CD8-positive, alpha-beta T cell (primary cell): ENCODE measurements at regions of chr22 and their contacts with region 1.

Region 1: DNA sequence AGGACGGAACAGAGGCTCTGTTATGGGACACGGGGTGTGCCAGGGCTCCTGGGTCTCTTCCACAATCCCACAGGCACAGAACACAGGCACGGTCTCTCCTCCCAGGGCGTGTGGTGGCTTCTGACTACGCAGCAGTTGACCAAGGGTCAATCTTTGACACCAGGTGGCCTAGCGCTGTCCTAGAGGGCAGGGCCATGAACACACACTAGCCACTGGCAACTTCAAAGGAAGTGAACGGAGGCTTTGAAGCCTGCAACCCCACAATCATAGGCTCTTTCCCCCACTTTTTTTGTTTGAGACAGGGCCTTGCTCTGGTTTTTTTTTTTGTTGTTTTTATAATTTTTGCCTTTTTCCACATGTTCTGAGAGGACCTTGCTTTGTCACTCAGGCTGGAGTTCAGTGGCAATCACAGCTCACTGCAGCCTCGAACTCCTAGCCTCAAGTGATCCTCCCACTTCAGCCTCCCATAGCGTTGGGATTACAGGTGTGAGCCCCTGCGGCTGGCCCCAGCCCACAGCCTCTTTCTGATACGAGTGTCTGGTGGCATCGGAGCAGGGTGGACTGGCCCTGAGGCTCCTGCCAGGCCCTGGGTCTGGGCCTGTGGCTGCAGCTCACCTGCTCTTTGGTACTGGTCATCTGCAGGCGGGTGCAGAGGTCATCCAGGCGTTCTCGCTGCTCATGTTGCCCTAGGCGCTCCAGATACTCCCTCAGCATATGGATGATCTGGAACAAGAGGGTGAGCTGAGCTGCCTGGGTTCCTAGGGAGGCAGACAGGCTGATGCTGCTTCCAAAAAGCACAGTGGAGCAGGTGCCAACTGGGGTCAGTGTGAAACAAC is 9.1 kb downstream of the GALR3 start:
- DNase-seq: no peak
- ATAC-seq: no peak
- H3K4me3 ChIP-seq: no peak overlapping the region
- H3K4me3 Mint-ChIP-seq: no peak overlapping the region
- H3K27ac ChIP-seq: no peak overlapping the region
- H3K27ac Mint-ChIP-seq: no peak overlapping the region
- H3K4me1 ChIP-seq: no peaks in the 10 kb centered on the region
- H3K4me1 Mint-ChIP-seq: no peaks in the 10 kb centered on the region
- H3K27me3 ChIP-seq: no peaks in the 10 kb centered on the region
- H3K27me3 Mint-ChIP-seq: no peaks in the 10 kb centered on the region
- CTCF ChIP-seq: no peak

Region 2: GRCh38 chr22:37457093-37457893 is 374.9 kb before region 1 on chr22:
- CTCF ChIA-PET with region 1: no interaction called
- POLR2A ChIA-PET with region 1: no interaction called
- intact Hi-C with region 1: no loop called
- DNase-seq: peak; percentile 72 to 90 (median 83)
- ATAC-seq: peak; percentile 98
- H3K4me3 ChIP-seq: no peak overlapping the region
- H3K4me3 Mint-ChIP-seq: no peak overlapping the region
- H3K27ac ChIP-seq: no peak overlapping the region
- H3K27ac Mint-ChIP-seq: no peak overlapping the region
- H3K4me1 ChIP-seq: no peaks in the 10 kb centered on the region
- H3K4me1 Mint-ChIP-seq: no peaks in the 10 kb centered on the region
- H3K27me3 ChIP-seq: no peaks in the 10 kb centered on the region
- H3K27me3 Mint-ChIP-seq: no peaks in the 10 kb centered on the region
- CTCF ChIP-seq: peak; percentile 82

Region 3: GRCh38 chr22:37777122-37777687 is 55.0 kb before region 1 on chr22:
- CTCF ChIA-PET with region 1: no interaction called
- POLR2A ChIA-PET with region 1: no interaction called
- intact Hi-C with region 1: no loop called
- DNase-seq: no peak
- ATAC-seq: no peak
- H3K4me3 ChIP-seq: no peak overlapping the region
- H3K4me3 Mint-ChIP-seq: no peak overlapping the region
- H3K27ac ChIP-seq: no peak overlapping the region
- H3K27ac Mint-ChIP-seq: no peak overlapping the region
- H3K4me1 ChIP-seq: no peaks in the 10 kb centered on the region
- H3K4me1 Mint-ChIP-seq: no peaks in the 10 kb centered on the region
- H3K27me3 ChIP-seq: no peaks in the 10 kb centered on the region
- H3K27me3 Mint-ChIP-seq: no peaks in the 10 kb centered on the region
- CTCF ChIP-seq: no peak

Region 4: DNA sequence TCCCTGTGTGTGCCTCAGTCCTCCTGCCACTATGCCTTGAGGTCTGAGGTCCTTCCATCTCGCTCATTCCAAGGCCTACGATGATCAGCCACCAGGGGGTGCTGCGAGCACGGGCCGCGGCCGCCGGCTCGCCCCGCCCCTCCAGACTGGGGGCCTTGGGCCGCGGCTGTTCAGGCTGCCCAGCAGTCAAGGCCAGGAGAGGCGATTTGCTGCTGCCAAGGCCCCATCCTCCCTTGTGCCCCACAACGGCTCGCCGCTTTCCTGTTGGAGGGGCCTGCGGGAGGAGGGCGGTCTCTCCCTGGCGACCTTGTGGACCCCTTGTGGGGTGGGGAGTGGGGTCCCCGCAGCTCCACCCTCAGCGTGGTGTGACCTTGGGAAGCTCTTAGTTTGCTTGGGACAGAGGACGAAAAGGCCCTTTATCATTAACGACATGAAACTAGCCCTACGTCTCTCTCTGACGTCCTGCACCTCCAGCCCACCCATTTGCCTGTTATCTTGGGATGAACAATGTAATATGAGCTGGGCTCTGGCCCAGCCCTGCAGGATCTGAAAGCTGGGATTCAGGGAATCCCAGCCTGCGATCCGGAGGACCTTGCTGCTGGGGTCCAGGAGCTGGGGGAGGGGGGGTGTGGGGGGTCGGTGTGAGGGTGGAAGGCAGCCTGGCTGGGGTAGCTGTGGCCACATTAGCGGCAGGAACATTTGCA is 14.4 kb before region 1 on chr22:
- CTCF ChIA-PET with region 1: interaction called, 18 read pairs
- POLR2A ChIA-PET with region 1: no interaction called
- intact Hi-C with region 1: no loop called
- DNase-seq: peak; percentile 64 to 88 (median 81)
- ATAC-seq: peak; percentile 86
- H3K4me3 ChIP-seq: peak overlapping the region; percentile 20 to 38
- H3K4me3 Mint-ChIP-seq: peak overlapping the region; percentile 65
- H3K27ac ChIP-seq: no peak overlapping the region
- H3K27ac Mint-ChIP-seq: no peak overlapping the region
- H3K4me1 ChIP-seq: peaks cover 16% of the 10 kb centered on the region
- H3K4me1 Mint-ChIP-seq: peaks cover 15% of the 10 kb centered on the region
- H3K27me3 ChIP-seq: peaks cover under 1 to 4% of the 10 kb centered on the region in 2 experiments
- H3K27me3 Mint-ChIP-seq: peaks cover 17% of the 10 kb centered on the region
- CTCF ChIP-seq: peak; percentile 86